Motor neuron (in vitro differentiated cells): ENCODE measurements at regions of chr18 and their contacts with region 1.

Region 1: GRCh38 chr18:74631623-74632283 is 34.1 kb downstream of the ZNF407 start:
- ATAC-seq: no peak
- H3K4me3 ChIP-seq: no peak overlapping the region
- H3K27ac ChIP-seq: no peak overlapping the region
- H3K4me1 ChIP-seq: peaks cover 6 to 16% of the 10 kb centered on the region in 2 donors

Region 2: DNA sequence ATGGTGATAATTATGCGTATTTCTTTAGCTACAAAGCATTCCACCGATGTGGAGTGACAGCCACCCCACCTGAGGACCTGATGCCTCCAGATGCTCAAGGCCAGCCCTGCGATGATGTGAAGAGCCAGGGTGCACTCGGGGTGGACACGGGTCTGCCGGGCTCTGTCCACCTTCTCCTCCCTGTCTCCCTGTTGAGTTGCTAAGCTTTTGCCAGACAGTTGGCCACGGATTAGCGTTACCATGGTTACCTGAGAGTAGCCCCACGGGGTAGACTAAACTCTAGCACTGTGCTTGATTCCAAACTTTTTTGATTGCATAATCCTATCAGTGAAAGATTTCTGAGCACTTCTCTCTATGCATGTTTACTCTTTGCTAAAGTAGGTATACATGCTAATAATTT is 709.5 kb after region 1 on chr18:
- in situ Hi-C with region 1: no loop called
- ATAC-seq: peak in 5 of 8 experiments; percentile 62 to 81 (median 69)
- H3K4me3 ChIP-seq: no peak overlapping the region
- H3K27ac ChIP-seq: no peak overlapping the region
- H3K4me1 ChIP-seq: peaks cover 15 to 25% of the 10 kb centered on the region in 2 donors

Region 3: GRCh38 chr18:76274468-76275289 is 1642.9 kb after region 1 on chr18:
- in situ Hi-C with region 1: loop called in 1 of 9 experiments (anchors 25 kb)
- ATAC-seq: peak; percentile 57 to 100 (median 99)
- H3K4me3 ChIP-seq: no peak overlapping the region
- H3K27ac ChIP-seq: peak overlapping the region in 1 of 2 donors; percentile 41
- H3K4me1 ChIP-seq: peaks cover 7 to 26% of the 10 kb centered on the region in 2 donors

Region 4: GRCh38 chr18:76349067-76349715 is 1717.4 kb after region 1 on chr18:
- in situ Hi-C with region 1: loop called in 1 of 9 experiments (anchors 25 kb)
- ATAC-seq: peak in 7 of 8 experiments; percentile 6 to 60 (median 47)
- H3K4me3 ChIP-seq: no peak overlapping the region
- H3K27ac ChIP-seq: no peak overlapping the region
- H3K4me1 ChIP-seq: peaks cover 9 to 12% of the 10 kb centered on the region in 2 donors